ENCODE measurements at regions of chr11 and their contacts with region 1.

Region 1: GRCh38 chr11:22730319-22730718 is 63.9 kb downstream of the GAS2 start:
- DNase-seq: no peak
- H3K4me3 Mint-ChIP-seq: no peak overlapping the region
- H3K27ac Mint-ChIP-seq: no peak overlapping the region
- H3K4me1 Mint-ChIP-seq: no peaks in the 10 kb centered on the region
- H3K27me3 Mint-ChIP-seq: no peaks in the 10 kb centered on the region

Region 2: GRCh38 chr11:22331771-22332170 is 398.5 kb before region 1 on chr11:
- CTCF ChIA-PET with region 1: no interaction called
- POLR2A ChIA-PET with region 1: no interaction called
- intact Hi-C with region 1: loop called (anchors 5 kb)
- DNase-seq: no peak
- H3K4me3 Mint-ChIP-seq: no peak overlapping the region
- H3K27ac Mint-ChIP-seq: no peak overlapping the region
- H3K4me1 Mint-ChIP-seq: no peaks in the 10 kb centered on the region
- H3K27me3 Mint-ChIP-seq: no peaks in the 10 kb centered on the region

Region 3: DNA sequence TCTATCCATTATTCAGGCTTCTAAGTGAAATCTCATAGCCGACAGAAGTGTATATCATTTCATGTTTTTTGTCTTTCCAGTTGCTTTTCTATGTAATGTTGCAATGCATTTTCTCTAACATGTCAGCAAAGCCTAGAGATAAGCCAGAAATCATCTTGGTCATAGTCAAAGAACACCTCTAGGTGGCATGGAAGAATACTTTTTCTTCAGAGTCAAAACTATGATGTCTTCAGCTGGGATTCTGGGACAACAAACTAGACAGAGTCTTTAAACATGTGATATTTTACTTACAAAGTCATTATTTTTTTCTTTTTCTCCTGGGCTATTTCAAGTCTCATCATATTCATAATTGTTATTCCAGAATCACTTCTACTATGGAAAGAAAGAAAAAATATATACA is 59.5 kb before region 1 on chr11:
- CTCF ChIA-PET with region 1: no interaction called
- POLR2A ChIA-PET with region 1: no interaction called
- intact Hi-C with region 1: loop called (anchors 1 kb)
- DNase-seq: no peak
- H3K4me3 Mint-ChIP-seq: no peak overlapping the region
- H3K27ac Mint-ChIP-seq: no peak overlapping the region
- H3K4me1 Mint-ChIP-seq: peaks cover 6% of the 10 kb centered on the region
- H3K27me3 Mint-ChIP-seq: peaks cover 44% of the 10 kb centered on the region

Measured in activated CD4-positive, alpha-beta memory T cell treated with anti-CD3 and anti-CD28 coated beads for 36 hours (primary cell).